A549 (cell line): ENCODE measurements at regions of chr9 and their contacts with region 1.

Region 1: DNA sequence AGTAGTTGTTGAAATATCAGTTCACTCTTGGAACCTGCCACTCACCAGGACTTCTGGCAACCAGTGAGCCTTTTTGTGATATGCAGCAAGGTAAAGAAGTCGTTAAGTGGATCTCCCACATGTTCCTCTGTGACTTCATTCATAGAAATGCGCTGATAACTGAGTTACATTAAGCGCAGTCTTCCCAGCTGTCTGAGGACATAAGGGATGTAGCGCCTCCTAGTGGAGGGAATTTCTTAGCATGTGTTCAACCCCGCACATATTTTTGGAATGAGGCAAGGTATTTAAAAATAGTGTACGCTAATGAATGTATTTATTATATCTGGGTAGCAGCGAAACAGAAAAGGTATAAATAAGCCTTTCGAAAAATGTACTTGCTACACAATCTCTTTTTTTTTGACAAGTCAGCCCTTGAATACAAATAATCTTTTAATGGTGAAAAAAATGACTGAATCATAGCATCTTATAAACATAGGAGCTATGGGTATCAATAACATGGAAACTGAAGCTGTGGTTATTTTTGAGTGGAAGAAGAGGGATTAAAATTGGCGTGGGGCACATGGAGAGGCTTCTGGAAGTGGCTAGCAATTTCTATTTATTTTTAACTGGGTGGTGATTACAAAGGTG is 38.0 kb downstream of the PALM2AKAP2 start:
- DNase-seq: peak; percentile 59 to 85
- ATAC-seq: peak; percentile 63 to 86; a peak in 5 of 6 replicates
- H3K4me3 ChIP-seq: no peak overlapping the region
- H3K27ac ChIP-seq: no peak overlapping the region
- H3K4me1 ChIP-seq: peaks cover 25% of the 10 kb centered on the region; the same call in 2 of the 3 replicates
- CTCF ChIP-seq: peak; percentile 85
- EP300 ChIP-seq: no peak
- POLR2A ChIP-seq: no peak
- RAD21 ChIP-seq: peak; percentile 70 to 73

Region 2: DNA sequence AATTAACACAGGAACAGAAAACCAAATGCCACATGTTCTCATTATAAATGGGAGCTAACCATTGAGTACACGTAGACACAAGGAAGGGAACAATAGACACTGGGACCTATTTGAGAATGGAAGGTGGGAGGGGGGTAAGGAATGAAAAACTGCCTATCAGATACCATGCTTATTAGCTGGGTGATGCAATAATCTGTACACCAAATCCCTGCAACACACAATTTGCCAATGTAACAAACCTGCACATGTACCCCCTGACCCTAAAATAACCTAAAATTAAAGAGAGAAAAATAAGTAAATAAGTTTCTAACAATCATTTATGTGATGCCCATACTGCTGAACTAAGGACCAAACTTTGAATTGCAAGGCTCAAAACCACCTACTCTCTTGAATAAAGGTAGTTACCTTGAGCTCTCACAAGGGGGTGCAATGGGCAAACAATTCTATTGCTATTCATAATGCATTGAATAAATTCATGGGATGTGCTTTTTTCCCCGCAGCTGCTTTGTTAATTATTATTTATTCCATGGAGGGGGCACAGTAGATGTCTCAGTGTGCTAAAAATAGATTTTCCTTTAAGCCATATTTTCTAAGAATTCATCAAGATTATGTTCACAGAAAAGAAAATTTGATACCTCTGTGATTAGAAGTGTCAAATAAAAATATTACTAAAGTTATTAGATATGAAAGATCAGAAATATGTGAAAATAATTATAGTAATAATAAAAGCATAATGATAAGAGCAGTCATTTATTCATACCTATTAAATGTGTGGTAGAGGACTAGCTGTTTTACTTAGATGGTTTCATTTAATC is 243.7 kb before region 1 on chr9:
- CTCF ChIA-PET with region 1: interaction called, 38 read pairs
- POLR2A ChIA-PET with region 1: interaction called, 3 read pairs
- DNase-seq: peak; percentile 43 to 58
- ATAC-seq: peak; percentile 85 to 88
- H3K4me3 ChIP-seq: no peak overlapping the region
- H3K27ac ChIP-seq: no peak overlapping the region
- H3K4me1 ChIP-seq: no peaks in the 10 kb centered on the region
- CTCF ChIP-seq: peak; percentile 77
- EP300 ChIP-seq: no peak
- POLR2A ChIP-seq: no peak
- RAD21 ChIP-seq: peak; percentile 83 to 88

Region 3: GRCh38 chr9:109640580-109641371 is 177.2 kb before region 1 on chr9:
- CTCF ChIA-PET with region 1: interaction called, 10 read pairs
- POLR2A ChIA-PET with region 1: no interaction called
- DNase-seq: peak in 1 of 2 experiments; percentile 13
- ATAC-seq: peak; percentile 64 to 72
- H3K4me3 ChIP-seq: peak overlapping the region; percentile 41
- H3K27ac ChIP-seq: 0 out of 6 replicates have a peak overlapping the region, but pooled peaks of 1 of the 2 experiments have one; percentile 17
- H3K4me1 ChIP-seq: no peaks in the 10 kb centered on the region
- CTCF ChIP-seq: no peak
- EP300 ChIP-seq: no peak
- POLR2A ChIP-seq: no peak
- RAD21 ChIP-seq: no peak

Region 4: GRCh38 chr9:109799792-109800191 is 18.2 kb before region 1 on chr9:
- CTCF ChIA-PET with region 1: interaction called, 25 read pairs
- POLR2A ChIA-PET with region 1: no interaction called
- DNase-seq: no peak
- ATAC-seq: no peak
- H3K4me3 ChIP-seq: no peak overlapping the region
- H3K27ac ChIP-seq: no peak overlapping the region
- H3K4me1 ChIP-seq: no peaks in the 10 kb centered on the region
- CTCF ChIP-seq: no peak
- EP300 ChIP-seq: no peak
- POLR2A ChIP-seq: no peak
- RAD21 ChIP-seq: no peak

Region 5: GRCh38 chr9:109806506-109807115 is 11.3 kb before region 1 on chr9:
- CTCF ChIA-PET with region 1: interaction called, 25 read pairs
- POLR2A ChIA-PET with region 1: no interaction called
- DNase-seq: no peak
- ATAC-seq: no peak
- H3K4me3 ChIP-seq: no peak overlapping the region
- H3K27ac ChIP-seq: no peak overlapping the region
- H3K4me1 ChIP-seq: no peaks in the 10 kb centered on the region
- CTCF ChIP-seq: no peak
- EP300 ChIP-seq: no peak
- POLR2A ChIP-seq: no peak
- RAD21 ChIP-seq: no peak

Region 6: GRCh38 chr9:109828254-109828653 is 10.3 kb after region 1 on chr9:
- CTCF ChIA-PET with region 1: interaction called, 13 read pairs
- POLR2A ChIA-PET with region 1: no interaction called
- DNase-seq: no peak
- ATAC-seq: no peak
- H3K4me3 ChIP-seq: no peak overlapping the region
- H3K27ac ChIP-seq: no peak overlapping the region
- H3K4me1 ChIP-seq: no peaks in the 10 kb centered on the region
- CTCF ChIP-seq: no peak
- EP300 ChIP-seq: no peak
- POLR2A ChIP-seq: no peak
- RAD21 ChIP-seq: no peak

Region 7: DNA sequence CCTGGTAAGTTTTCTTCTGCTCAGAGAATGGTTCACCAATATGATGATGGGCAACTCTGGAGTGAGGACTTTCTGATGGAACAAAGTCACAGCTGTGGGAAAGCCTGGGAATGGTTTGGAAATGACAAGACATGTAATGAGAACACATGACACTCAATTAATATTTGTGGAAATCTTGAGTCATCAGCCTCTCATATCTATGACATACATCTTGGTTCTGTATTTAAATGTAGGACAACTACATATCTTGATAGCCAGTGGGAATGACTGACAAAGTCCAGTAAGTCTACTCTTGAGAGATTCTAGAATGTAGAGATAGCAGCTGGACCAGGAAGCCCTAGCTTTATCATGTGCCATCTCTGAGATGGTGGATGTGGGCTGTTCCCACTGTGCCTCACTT is 47.6 kb after region 1 on chr9:
- CTCF ChIA-PET with region 1: no interaction called
- POLR2A ChIA-PET with region 1: no interaction called
- DNase-seq: no peak
- ATAC-seq: no peak
- H3K4me3 ChIP-seq: no peak overlapping the region
- H3K27ac ChIP-seq: no peak overlapping the region
- H3K4me1 ChIP-seq: no peaks in the 10 kb centered on the region
- CTCF ChIP-seq: no peak
- EP300 ChIP-seq: no peak
- POLR2A ChIP-seq: no peak
- RAD21 ChIP-seq: no peak